IMR-90 (cell line): ENCODE measurements at regions of chr5 and their contacts with region 1.

Region 1: GRCh38 chr5:115977988-115978387 is 15.7 kb downstream of the LVRN start:
- DNase-seq: peak; percentile 92
- ATAC-seq: peak; percentile 82
- H3K4me3 ChIP-seq: no peak overlapping the region
- H3K27ac ChIP-seq: no peak overlapping the region; the same call in 1 of the 2 replicates
- H3K4me1 ChIP-seq: peaks cover 17% of the 10 kb centered on the region
- H3K27me3 ChIP-seq: no peaks in the 10 kb centered on the region
- CTCF ChIP-seq: no peak
- POLR2A ChIP-seq: no peak
- RAD21 ChIP-seq: no peak

Region 2: DNA sequence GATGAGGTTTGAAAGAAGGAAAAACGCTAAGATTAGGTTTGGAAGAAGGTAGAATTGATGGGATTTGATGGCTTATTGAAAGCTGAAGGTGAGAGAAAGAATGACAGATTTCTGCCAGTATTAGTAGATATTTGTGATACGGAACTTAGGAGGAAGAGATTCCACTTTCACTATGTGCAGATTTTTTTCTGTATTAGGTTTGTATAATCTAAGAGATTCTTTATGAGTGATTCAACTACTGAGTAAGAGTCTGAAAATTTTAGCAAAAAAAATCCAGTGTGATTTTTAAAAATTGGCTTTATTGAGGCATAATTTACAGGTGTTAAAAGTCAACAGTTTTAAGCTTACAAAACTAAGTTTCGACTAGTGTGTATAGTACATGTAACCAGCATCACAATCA is 82.2 kb before region 1 on chr5:
- CTCF ChIA-PET with region 1: no interaction called
- POLR2A ChIA-PET with region 1: no interaction called
- dilution Hi-C with region 1: no loop called
- in situ Hi-C with region 1: no loop called
- intact Hi-C with region 1: loop called (anchors 2 kb)
- DNase-seq: peak; percentile 55
- ATAC-seq: peak; percentile 83
- H3K4me3 ChIP-seq: peak overlapping the region; percentile 54; the same call in 1 of the 2 replicates
- H3K27ac ChIP-seq: peak overlapping the region; percentile 59
- H3K4me1 ChIP-seq: peaks cover 14% of the 10 kb centered on the region
- H3K27me3 ChIP-seq: no peaks in the 10 kb centered on the region
- CTCF ChIP-seq: no peak
- POLR2A ChIP-seq: no peak
- RAD21 ChIP-seq: no peak

Region 3: DNA sequence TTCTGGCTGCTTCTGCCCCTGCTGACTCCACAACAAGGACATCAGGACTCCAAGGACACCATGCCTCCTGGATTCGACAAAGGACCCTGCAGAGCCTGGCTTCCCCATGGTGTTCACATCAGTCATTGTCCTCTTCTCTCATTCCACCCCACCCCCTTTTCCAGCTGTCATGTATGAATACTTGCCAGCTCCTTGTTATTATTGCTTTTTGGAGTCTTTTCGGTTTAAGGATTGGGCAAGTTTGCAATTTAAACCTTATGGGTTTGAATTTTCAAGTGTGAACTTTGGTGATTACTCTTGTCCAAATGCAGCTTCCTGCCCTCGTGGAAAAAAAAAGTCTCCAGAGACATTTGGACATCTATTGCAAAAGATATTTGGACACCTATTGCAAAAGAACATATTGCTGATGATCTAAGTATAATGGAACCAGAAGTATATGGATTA is 29.9 kb before region 1 on chr5:
- CTCF ChIA-PET with region 1: no interaction called
- POLR2A ChIA-PET with region 1: no interaction called
- dilution Hi-C with region 1: no loop called
- in situ Hi-C with region 1: no loop called
- intact Hi-C with region 1: loop called (anchors 2 kb)
- DNase-seq: peak; percentile 33
- ATAC-seq: 0 out of 2 replicates have a peak, but pooled peaks have one; percentile 14
- H3K4me3 ChIP-seq: no peak overlapping the region
- H3K27ac ChIP-seq: peak overlapping the region; percentile 82; the same call in 1 of the 2 replicates
- H3K4me1 ChIP-seq: peaks cover 9% of the 10 kb centered on the region
- H3K27me3 ChIP-seq: no peaks in the 10 kb centered on the region
- CTCF ChIP-seq: no peak
- POLR2A ChIP-seq: no peak
- RAD21 ChIP-seq: no peak

Region 4: DNA sequence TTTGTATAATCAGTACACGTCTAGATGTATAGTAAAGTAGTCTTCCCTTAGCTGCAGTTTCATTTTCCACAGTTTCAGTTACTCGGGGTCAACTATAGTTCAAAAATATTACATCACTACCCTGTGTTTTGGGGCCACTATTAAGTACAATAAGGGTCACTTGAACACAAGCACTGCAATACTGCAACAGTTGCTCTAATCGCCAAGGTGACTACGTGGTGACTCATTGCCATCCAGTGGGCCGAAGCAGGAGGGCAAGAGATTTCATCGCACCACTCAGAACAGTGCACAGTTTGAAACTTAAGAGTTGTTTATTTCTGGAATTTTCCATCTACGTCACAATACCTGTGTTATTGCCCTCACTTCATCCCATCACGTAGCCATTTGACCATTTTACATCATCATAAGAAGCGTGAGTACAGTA is 54.1 kb after region 1 on chr5 and contains the start of gene ARL14EPL:
- CTCF ChIA-PET with region 1: interaction called, 3 read pairs
- POLR2A ChIA-PET with region 1: no interaction called
- dilution Hi-C with region 1: no loop called
- in situ Hi-C with region 1: no loop called
- intact Hi-C with region 1: loop called (anchors 2 kb)
- DNase-seq: peak; percentile 92
- ATAC-seq: peak; percentile 98
- H3K4me3 ChIP-seq: no peak within 1 kb of the TSS
- H3K27ac ChIP-seq: no peak within 1 kb of the TSS
- H3K4me1 ChIP-seq: no peaks in the 10 kb centered on the region
- H3K27me3 ChIP-seq: no peaks in the 10 kb centered on the region
- CTCF ChIP-seq: peak; percentile 67
- POLR2A ChIP-seq: no peak
- RAD21 ChIP-seq: peak; percentile 70
- total RNA-seq, gene ARL14EPL: not detected in 2 replicates